ENCODE measurements at regions of chr3 and their contacts with region 1.

Region 1: DNA sequence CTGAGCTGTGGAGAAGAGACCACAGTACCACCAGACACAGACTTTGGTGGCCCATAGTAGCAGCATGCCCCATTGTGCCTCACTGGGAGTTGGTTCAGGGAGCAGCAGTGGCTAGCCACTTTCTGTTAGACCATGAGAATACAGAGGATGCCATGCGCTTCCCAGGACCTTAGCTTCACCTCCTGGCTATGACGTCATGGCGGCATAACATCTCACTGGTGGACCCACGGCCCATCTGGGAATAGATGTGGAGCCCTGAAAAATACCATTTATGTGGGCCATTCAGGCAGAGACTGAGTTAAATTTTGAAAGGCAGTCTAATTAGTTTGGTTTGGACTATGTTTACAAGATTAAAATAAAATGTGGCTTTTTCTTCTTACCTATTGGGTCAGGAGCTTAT is 55.1 kb upstream of the NMD3 start:
- DNase-seq: no peak
- CTCF ChIP-seq: no peak

Region 2: GRCh38 chr3:161149529-161149928 is 16.5 kb before region 1 on chr3:
- CTCF ChIA-PET with region 1: interaction called, 10 read pairs
- POLR2A ChIA-PET with region 1: no interaction called
- DNase-seq: no peak
- CTCF ChIP-seq: no peak